ENCODE measurements at regions of chr15 and their contacts with region 1.

Region 1: GRCh38 chr15:91022075-91022835 is at the start of gene VPS33B:
- DNase-seq: peak; percentile 89
- ATAC-seq: peak; percentile 84
- H3K4me3 ChIP-seq: peak within 1 kb of the TSS; percentile 79 to 97 (median 92)
- H3K4me3 Mint-ChIP-seq: peak within 1 kb of the TSS; percentile 91
- H3K27ac ChIP-seq: peak within 1 kb of the TSS; percentile 62 to 69
- H3K27ac Mint-ChIP-seq: peak within 1 kb of the TSS; percentile 89
- H3K4me1 ChIP-seq: peaks cover 15 to 17% of the 10 kb centered on the region in 2 donors
- H3K4me1 Mint-ChIP-seq: peaks cover 37% of the 10 kb centered on the region
- H3K27me3 ChIP-seq: no peaks in the 10 kb centered on the region
- H3K27me3 Mint-ChIP-seq: no peaks in the 10 kb centered on the region
- CTCF ChIP-seq: no peak
- total RNA-seq, gene VPS33B: 27.7 and 30.0 TPM in 2 replicates

Region 2: DNA sequence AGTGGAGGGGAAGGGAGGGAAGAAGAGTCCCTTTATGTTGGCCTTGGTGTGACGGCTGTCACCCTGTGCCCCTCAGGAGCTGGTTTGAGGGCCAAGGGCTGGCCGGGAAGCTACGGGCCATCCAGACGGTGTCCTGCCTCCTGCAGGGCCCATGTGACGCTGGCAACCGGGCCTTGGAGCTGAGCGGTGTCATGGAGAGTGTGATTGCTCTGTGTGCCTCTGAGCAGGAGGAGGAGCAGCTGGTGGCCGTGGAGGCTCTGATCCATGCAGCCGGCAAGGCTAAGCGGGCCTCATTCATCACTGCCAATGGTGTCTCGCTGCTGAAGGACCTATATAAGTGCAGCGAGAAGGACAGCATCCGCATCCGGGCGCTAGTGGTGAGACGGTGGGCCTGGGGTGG is 75.7 kb before region 1 on chr15:
- CTCF ChIA-PET with region 1: no interaction called
- POLR2A ChIA-PET with region 1: interaction called, 10 read pairs
- intact Hi-C with region 1: no loop called
- DNase-seq: no peak
- ATAC-seq: no peak
- H3K4me3 ChIP-seq: no peak overlapping the region
- H3K4me3 Mint-ChIP-seq: no peak overlapping the region
- H3K27ac ChIP-seq: no peak overlapping the region
- H3K27ac Mint-ChIP-seq: no peak overlapping the region
- H3K4me1 ChIP-seq: no peaks in the 10 kb centered on the region
- H3K4me1 Mint-ChIP-seq: no peaks in the 10 kb centered on the region
- H3K27me3 ChIP-seq: no peaks in the 10 kb centered on the region
- H3K27me3 Mint-ChIP-seq: no peaks in the 10 kb centered on the region
- CTCF ChIP-seq: no peak

Region 3: GRCh38 chr15:90994417-90995311 is 27.6 kb before region 1 on chr15 and contains the start of gene PRC1:
- CTCF ChIA-PET with region 1: interaction called, 5 read pairs
- POLR2A ChIA-PET with region 1: no interaction called
- intact Hi-C with region 1: loop called (anchors 2 kb)
- DNase-seq: peak; percentile 97
- ATAC-seq: peak; percentile 97
- H3K4me3 ChIP-seq: peak within 1 kb of the TSS; percentile 61 to 93 (median 85)
- H3K4me3 Mint-ChIP-seq: peak within 1 kb of the TSS; percentile 99
- H3K27ac ChIP-seq: peak within 1 kb of the TSS; percentile 81 to 90
- H3K27ac Mint-ChIP-seq: peak within 1 kb of the TSS; percentile 96
- H3K4me1 ChIP-seq: peaks cover 10 to 14% of the 10 kb centered on the region in 2 donors
- H3K4me1 Mint-ChIP-seq: peaks cover 20% of the 10 kb centered on the region
- H3K27me3 ChIP-seq: no peaks in the 10 kb centered on the region
- H3K27me3 Mint-ChIP-seq: no peaks in the 10 kb centered on the region
- CTCF ChIP-seq: no peak
- total RNA-seq, gene PRC1: 8.1 and 11.6 TPM in 2 replicates

Region 4: DNA sequence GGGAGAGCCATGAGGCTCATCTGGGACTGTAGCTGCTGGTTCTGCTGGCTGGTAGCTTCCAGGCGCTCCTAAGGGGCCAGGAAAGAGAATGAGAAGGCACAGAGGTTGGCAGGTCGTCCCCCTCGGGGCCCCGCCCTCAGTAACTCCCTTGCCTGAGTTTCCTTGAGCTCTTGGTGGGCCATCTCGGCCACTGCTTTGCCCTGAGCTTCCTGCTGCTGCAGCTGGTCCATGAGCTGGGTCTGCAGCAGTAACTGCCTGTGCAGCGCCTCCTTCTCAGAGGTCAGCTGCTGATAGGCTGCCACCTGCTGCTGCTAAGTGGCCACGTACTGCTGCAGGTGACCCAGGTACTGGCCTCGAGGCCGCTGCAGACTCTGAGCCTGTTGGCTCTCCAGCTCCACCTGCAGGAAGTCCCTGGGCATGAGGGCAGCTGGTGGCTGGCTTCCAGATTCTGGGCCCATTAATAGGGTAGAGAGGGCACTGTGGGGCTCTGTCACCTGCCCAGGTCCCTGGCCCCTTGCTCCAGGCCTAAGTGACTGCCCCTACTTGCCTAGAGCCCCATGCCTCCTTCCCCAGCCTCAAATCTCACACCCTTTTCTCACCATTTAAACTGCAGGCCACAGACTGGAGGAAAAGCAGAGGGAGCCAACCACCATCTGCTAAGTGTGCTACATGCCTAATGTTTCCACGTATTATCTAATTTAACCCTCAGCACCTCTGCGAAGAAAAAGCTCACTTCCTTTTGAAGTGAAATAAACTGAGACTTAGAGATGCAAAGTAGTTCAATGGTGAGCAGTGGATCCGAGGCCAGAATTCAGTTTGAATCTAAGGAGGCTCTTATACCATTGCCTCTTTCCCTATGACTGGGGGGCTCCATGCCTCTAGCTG is 10.9 kb after region 1 on chr15:
- CTCF ChIA-PET with region 1: interaction called, 11 read pairs
- POLR2A ChIA-PET with region 1: no interaction called
- intact Hi-C with region 1: no loop called
- DNase-seq: peak; percentile 57
- ATAC-seq: peak; percentile 63
- H3K4me3 ChIP-seq: no peak overlapping the region
- H3K4me3 Mint-ChIP-seq: no peak overlapping the region
- H3K27ac ChIP-seq: no peak overlapping the region
- H3K27ac Mint-ChIP-seq: no peak overlapping the region
- H3K4me1 ChIP-seq: peaks cover 0 to 5% of the 10 kb centered on the region in 2 donors
- H3K4me1 Mint-ChIP-seq: peaks cover 3% of the 10 kb centered on the region
- H3K27me3 ChIP-seq: peaks cover 0 to 3% (median 0%) of the 10 kb centered on the region in 4 experiments
- H3K27me3 Mint-ChIP-seq: no peaks in the 10 kb centered on the region
- CTCF ChIP-seq: peak; percentile 73

Measured in B cell (primary cell).